ENCODE measurements at regions of chr2 and their contacts with region 1.

Region 1: GRCh38 chr2:61176755-61177726 is 15.1 kb downstream of the C2orf74 start:
- DNase-seq: peak; percentile 90 to 96
- H3K4me3 ChIP-seq: peak overlapping the region; percentile 58 to 82
- H3K27ac ChIP-seq: peak overlapping the region; percentile 90 to 98
- H3K4me1 ChIP-seq: peaks cover 0 to 46% (median 39%) of the 10 kb centered on the region in 4 donors
- H3K27me3 ChIP-seq: no peaks in the 10 kb centered on the region
- CTCF ChIP-seq: peak in 1 of 2 experiments; percentile 16

Region 2: DNA sequence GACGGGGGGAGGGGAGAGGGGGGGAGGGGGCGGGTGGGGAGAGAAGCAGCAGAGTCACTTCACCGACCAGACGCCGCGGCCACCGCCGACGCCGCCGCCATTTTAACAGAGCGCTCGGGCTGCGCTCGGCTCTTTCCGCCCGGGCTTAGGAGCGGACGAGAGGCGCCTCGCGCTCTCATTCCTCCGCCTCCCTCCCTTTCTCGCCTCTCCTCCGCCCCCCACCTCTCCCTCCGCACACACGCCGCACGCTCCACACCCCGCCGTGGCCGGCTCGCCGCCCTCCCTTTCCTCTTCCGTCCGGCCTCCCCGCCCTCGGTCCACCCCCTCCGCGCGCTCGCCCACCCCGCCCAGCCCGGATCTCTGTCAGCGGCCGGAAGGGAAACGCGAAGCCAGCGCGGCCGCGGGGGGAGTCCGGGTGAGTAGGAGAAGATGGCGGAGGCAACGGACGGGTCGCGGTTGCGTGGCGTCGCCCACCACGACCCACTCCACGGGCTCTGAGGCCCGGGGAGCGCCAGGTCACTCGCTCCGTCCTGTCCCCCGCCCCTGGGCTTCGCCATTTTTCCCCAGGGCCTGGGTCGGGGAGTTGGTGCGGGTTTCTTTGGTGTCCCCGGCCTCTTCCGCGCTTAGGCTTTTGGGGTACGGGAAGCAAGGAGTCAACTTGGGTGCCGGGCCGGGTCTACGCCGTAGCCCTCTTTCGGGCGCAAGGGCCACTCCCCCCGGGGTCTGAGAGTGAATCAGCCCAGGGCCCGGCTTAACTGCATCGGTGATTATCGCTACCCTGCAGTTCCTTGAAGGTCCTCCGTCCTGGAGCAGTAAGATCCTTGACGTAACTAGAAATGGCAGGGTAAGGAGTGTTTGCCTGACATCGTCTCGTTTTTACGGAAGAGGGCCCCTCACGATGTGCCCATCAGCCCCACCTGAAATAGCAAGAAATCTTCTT is 294.2 kb after region 1 on chr2 and contains the start of gene USP34:
- intact Hi-C with region 1: loop called (anchors 10 kb)
- DNase-seq: peak; percentile 93 to 97
- H3K4me3 ChIP-seq: peak within 1 kb of the TSS; percentile 82 to 94
- H3K27ac ChIP-seq: peak within 1 kb of the TSS; percentile 97 to 99
- H3K4me1 ChIP-seq: peaks cover 0 to 38% (median 18%) of the 10 kb centered on the region in 4 donors
- H3K27me3 ChIP-seq: no peaks in the 10 kb centered on the region
- CTCF ChIP-seq: no peak

Measured in tibial artery (tissue), 4 donors.